PC-3 (cell line): ENCODE measurements at regions of chr11 and their contacts with region 1.

Region 1: DNA sequence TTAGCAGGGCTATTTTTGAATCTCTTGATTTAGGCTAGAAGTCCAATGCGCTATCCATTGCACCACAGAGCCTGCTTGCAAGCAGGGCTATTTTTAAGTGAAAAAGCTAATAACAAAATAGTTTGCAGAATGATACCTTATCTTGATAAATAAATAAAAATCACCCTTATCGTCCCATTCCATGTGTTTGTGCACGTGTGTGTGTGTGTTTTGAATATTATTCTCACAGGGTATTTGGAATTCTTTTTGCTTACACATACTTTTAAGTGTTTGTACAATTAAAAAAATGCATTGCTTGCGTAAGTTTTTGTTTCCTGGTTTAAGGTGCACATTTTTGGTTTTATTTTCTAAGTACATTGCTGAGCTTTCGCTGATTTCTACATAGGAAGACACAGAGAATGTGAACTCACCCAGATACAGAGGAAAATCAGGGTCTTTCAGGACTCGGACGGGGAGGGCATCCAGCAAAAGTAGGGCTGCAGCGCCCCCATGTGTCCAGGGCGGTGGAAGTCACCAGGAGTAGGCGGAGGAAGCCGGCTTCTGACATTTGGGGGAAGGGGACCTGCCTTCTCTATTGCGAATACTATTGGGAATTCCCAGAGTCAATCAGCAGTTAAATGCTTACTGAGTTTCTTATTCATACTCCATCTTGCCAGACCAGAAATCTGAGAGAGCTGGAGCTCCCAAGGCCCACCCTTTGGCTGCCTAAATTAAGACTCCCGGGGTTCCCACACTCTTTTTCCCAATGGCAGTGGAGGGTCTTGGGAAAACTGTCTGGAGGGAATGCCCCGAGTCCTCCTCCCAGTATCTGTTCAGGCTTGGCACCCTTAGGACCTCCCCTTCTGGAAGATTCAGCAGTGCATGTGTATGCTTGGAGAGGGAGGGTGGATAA is 27.2 kb downstream of the SLC1A2 start:
- DNase-seq: peak; percentile 81
- ATAC-seq: peak; percentile 62
- H3K4me3 ChIP-seq: peak overlapping the region; percentile 58
- H3K27ac ChIP-seq: peak overlapping the region; percentile 80
- H3K4me1 ChIP-seq: peaks cover 21% of the 10 kb centered on the region
- H3K27me3 ChIP-seq: no peaks in the 10 kb centered on the region
- CTCF ChIP-seq: peak; percentile 96

Region 2: DNA sequence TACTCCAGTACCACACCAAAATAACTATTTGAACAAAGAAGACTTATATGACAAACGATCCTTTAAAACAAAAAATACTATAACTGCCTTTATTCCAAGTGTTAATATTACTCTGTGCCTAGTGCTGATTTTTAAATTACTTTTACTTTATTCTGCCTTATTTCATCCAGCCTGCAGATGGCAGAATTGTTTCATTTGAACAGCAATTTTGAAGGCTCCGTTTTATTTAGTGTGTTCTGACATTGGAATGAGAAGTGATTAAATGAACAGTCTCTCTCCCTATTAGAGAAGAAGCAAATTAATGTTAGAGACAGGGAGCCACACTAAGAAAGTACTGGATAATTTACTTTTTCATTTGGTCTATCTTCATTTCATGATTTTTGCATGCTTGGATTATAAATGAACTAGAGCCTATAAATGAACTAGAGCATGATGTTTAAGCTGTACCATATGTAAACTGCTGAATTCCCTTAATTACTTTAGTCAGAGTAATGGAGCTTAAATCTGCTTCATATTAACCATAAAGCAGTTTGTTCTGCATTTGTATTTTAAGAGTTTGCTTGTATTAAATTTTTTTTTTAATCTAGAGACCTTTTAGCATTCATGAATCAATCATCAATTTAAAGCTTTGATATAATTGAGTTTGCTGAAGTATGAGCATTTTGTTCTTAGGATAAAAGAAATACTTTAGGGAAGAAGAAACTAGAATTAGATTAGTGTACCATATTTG is 465.9 kb before region 1 on chr11:
- CTCF ChIA-PET with region 1: interaction called, 7 read pairs
- POLR2A ChIA-PET with region 1: no interaction called
- intact Hi-C with region 1: loop called (anchors 1 kb)
- DNase-seq: peak; percentile 67
- ATAC-seq: peak; percentile 56
- H3K4me3 ChIP-seq: no peak overlapping the region
- H3K27ac ChIP-seq: no peak overlapping the region
- H3K4me1 ChIP-seq: peaks cover 12% of the 10 kb centered on the region
- H3K27me3 ChIP-seq: no peaks in the 10 kb centered on the region
- CTCF ChIP-seq: peak; percentile 86

Region 3: DNA sequence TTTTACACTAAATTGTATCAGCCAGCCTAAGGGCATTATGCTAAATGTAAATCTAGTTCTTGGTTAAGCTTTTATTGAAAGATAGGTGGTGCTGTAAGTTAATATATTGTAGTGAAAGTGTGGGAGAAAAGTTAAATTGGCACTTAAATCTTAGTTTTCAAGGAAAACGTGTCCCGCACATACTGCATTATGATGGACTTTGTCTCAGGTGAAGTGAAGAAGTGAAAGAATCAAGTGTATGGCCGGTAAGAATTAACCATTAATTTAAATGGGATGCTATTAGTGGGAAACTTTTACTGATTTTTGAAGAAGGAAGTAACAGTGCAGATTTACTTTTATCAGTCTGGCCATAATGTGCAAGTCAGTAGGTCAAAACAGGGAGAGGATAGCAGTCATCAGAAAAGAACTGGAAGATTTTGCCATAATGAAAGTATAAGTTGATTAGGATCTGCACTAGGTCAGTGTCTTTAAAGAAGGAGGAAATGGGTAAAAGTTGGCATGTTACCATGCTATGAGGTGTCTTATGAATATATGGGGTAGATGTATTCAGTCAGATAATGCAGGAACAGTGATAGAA is 394.1 kb before region 1 on chr11:
- CTCF ChIA-PET with region 1: interaction called, 4 read pairs
- POLR2A ChIA-PET with region 1: no interaction called
- intact Hi-C with region 1: loop called (anchors 1 kb)
- DNase-seq: peak; percentile 71
- ATAC-seq: peak; percentile 74
- H3K4me3 ChIP-seq: peak overlapping the region; percentile 5; the same call in 1 of the 2 replicates
- H3K27ac ChIP-seq: peak overlapping the region; percentile 79
- H3K4me1 ChIP-seq: peaks cover 20% of the 10 kb centered on the region
- H3K27me3 ChIP-seq: no peaks in the 10 kb centered on the region
- CTCF ChIP-seq: peak; percentile 85

Region 4: DNA sequence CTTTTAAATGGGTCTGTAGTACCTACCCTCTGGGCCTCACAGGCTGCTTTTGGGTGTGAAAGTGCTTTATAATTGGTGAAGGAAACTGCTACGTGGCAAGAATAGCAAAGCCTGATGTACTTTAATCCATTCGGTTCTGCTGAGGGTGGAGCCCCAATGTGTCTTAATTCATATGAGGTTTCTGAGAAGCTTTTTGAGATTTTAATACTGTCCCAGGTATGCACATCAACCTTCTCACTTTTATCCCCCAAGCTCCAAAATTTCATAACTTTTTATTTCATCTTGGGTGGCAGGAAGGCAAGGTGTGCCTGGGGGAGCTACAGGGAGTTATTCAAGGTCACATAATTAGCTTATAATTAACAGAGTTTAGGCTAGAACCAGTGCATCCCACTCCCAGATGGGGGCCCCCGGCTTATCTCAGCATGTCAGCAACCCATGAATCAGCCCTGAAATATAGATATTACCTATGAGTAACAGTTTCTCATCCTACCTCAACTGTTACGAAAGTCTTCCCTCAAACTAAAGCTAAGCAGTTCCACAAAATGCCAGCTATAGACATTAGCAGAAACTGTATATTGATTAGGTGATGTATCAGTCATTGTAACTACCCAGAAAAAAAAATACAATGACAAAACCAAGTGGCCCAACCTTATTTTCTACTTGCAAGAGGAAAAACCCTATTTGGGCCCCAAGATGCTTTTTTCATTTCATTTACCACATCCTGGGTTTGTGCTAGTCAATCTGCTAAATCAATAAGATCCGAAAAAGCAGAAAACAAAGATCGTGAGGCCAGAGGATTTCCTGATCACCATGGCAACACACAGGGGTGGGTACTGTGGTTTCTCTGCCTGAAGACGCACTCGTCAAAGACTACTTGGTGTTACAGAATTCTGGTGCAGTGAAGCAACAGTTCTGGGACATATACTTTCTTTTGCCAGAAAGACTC is 226.5 kb before region 1 on chr11:
- CTCF ChIA-PET with region 1: no interaction called
- POLR2A ChIA-PET with region 1: no interaction called
- intact Hi-C with region 1: loop called (anchors 2 kb)
- DNase-seq: peak; percentile 71
- ATAC-seq: peak; percentile 29
- H3K4me3 ChIP-seq: peak overlapping the region; percentile 42
- H3K27ac ChIP-seq: peak overlapping the region; percentile 97
- H3K4me1 ChIP-seq: peaks cover 64% of the 10 kb centered on the region
- H3K27me3 ChIP-seq: no peaks in the 10 kb centered on the region
- CTCF ChIP-seq: no peak

Region 5: GRCh38 chr11:35321532-35322359 is 70.4 kb before region 1 on chr11:
- CTCF ChIA-PET with region 1: no interaction called
- POLR2A ChIA-PET with region 1: no interaction called
- intact Hi-C with region 1: no loop called
- DNase-seq: no peak
- ATAC-seq: no peak
- H3K4me3 ChIP-seq: no peak overlapping the region
- H3K27ac ChIP-seq: no peak overlapping the region
- H3K4me1 ChIP-seq: peaks cover 5% of the 10 kb centered on the region; the same call in 1 of the 2 replicates
- H3K27me3 ChIP-seq: no peaks in the 10 kb centered on the region
- CTCF ChIP-seq: no peak

Region 6: DNA sequence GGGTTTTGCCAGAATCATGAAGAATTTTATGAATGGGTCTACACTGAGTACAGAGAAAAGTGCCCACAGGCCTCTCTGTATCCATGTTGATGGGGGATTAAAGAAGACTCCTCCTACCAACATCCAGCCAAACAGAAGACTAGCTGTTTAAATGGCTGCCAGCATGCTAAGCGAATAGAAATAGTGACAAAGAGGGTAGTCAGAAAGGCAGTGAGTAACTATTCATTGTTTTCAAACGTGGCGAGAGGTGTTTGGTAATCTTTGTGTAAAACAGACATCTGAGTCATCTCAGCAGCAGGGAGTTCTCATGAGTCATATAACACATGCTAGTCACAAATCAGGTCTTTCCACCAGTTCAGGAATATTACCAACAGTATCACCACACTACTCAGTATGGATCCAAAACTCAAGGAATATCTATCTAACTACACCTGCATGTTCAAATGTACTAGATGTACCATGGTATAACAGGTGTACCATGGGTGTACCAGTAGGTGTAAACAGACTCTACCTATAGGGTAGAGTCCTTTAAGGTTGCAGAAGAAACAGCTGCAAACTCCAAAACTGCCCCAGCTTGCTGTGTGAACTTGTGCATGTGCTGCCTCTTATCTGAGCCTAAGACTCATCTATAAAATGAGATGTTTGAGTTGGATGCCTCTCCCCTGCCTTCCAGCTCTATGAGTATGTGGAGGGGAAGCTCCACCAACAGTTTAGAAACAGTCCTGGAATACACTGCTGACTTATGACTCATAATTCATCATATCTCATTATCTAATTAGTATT is 54.8 kb before region 1 on chr11:
- CTCF ChIA-PET with region 1: no interaction called
- POLR2A ChIA-PET with region 1: no interaction called
- intact Hi-C with region 1: loop called (anchors 5 kb)
- DNase-seq: peak; percentile 97
- ATAC-seq: peak; percentile 90
- H3K4me3 ChIP-seq: peak overlapping the region; percentile 33; the same call in 1 of the 2 replicates
- H3K27ac ChIP-seq: peak overlapping the region; percentile 98
- H3K4me1 ChIP-seq: peaks cover 29% of the 10 kb centered on the region
- H3K27me3 ChIP-seq: no peaks in the 10 kb centered on the region
- CTCF ChIP-seq: no peak